ENCODE measurements at regions of chr3 and their contacts with region 1.

Region 1: GRCh38 chr3:127817396-127817841 is 4.9 kb downstream of the MGLL start:
- DNase-seq: no peak

Region 2: DNA sequence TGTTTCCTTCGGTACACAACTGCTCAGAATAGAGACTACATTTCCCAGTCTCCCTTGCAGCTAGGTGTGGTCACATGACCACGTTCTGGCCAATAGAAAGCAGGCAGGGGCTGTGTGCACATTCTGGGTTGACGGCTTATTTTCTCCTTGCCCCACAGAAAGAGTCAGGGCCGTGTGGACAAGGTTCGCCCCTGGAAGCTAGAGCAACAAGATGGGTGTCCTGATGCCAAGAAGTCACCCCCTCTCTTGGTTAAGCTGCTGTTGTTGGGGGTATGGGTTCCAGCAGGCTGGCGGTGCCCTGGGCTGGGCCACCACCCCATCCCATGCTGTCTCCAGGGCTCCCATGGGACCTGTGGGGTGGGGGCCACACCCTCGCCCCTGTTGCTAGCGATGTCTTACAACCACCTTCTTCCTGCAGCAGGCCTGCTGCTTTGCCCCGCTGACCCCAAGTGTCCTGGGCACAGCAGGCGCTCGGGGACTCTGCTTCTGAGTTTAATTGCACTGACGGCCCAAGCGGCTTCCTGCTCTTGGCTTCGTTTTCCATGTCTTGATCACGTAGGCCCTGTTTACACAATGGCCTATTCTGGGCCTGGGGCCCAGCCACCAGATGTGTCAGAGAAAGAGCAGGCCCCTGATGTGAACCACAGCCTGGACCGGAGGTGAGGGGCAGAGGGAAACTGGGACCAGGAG is 119.7 kb before region 1 on chr3:
- intact Hi-C with region 1: loop called (anchors 5 kb)
- DNase-seq: peak; percentile 94

Region 3: DNA sequence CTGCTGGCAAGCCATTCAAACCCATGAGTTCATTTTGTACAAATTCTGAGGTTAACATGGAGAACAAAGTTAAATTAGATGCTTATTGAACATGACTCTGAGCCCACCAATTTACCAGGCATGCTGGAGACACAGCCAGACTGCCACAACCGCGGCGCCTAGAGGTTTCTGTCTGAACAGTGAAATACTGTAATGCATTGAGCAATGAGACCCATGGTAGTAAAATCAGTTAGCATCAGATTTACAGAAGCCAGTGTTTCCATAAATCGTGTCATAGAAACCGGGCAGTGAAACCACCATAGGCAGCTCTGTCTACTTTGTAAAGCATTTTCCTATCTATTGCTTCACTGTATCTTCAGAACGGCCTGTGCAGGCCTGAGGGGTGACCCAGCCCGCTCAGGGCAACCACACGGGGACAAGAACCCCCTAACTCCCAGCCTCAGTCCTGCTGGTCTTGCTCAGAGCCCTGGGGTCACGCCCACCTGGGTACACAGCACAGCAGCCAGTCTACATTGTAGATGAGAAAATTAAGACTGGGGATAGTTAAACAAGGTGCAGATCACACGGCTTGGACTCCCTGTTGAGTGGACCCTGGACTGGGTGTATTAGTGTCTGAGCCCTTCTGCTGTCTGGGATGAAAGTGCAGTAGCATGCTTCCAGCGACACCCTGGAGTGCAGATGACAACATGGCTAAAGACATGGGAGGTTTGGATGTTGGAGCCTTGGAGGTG is 39.3 kb before region 1 on chr3:
- intact Hi-C with region 1: loop called in 1 of 2 experiments (anchors 1 kb)
- DNase-seq: peak; percentile 58

Region 4: GRCh38 chr3:127857333-127857732 is 39.9 kb after region 1 on chr3:
- intact Hi-C with region 1: no loop called
- DNase-seq: no peak